ENCODE measurements at regions of chr11 and their contacts with region 1.

Region 1: GRCh38 chr11:66677599-66678375 is at the start of gene RBM4B:
- DNase-seq: peak; percentile 98
- ATAC-seq: peak; percentile 95
- H3K4me3 Mint-ChIP-seq: peak within 1 kb of the TSS; percentile 89
- H3K27ac Mint-ChIP-seq: peak within 1 kb of the TSS; percentile 100
- H3K4me1 Mint-ChIP-seq: peaks cover 29% of the 10 kb centered on the region
- H3K27me3 Mint-ChIP-seq: no peaks in the 10 kb centered on the region
- CTCF ChIP-seq: no peak
- total RNA-seq, gene RBM4B: 14.1 to 21.3 TPM (median 20.3 TPM) in 3 replicates

Region 2: GRCh38 chr11:66414120-66414934 is 263.5 kb before region 1 on chr11:
- CTCF ChIA-PET with region 1: interaction called, 42 read pairs
- POLR2A ChIA-PET with region 1: interaction called, 5 read pairs
- DNase-seq: peak; percentile 33
- ATAC-seq: peak; percentile 82
- H3K4me3 Mint-ChIP-seq: peak overlapping the region; percentile 39
- H3K27ac Mint-ChIP-seq: peak overlapping the region; percentile 78
- H3K4me1 Mint-ChIP-seq: peaks cover 46% of the 10 kb centered on the region
- H3K27me3 Mint-ChIP-seq: peaks cover 33% of the 10 kb centered on the region
- CTCF ChIP-seq: no peak

Region 3: DNA sequence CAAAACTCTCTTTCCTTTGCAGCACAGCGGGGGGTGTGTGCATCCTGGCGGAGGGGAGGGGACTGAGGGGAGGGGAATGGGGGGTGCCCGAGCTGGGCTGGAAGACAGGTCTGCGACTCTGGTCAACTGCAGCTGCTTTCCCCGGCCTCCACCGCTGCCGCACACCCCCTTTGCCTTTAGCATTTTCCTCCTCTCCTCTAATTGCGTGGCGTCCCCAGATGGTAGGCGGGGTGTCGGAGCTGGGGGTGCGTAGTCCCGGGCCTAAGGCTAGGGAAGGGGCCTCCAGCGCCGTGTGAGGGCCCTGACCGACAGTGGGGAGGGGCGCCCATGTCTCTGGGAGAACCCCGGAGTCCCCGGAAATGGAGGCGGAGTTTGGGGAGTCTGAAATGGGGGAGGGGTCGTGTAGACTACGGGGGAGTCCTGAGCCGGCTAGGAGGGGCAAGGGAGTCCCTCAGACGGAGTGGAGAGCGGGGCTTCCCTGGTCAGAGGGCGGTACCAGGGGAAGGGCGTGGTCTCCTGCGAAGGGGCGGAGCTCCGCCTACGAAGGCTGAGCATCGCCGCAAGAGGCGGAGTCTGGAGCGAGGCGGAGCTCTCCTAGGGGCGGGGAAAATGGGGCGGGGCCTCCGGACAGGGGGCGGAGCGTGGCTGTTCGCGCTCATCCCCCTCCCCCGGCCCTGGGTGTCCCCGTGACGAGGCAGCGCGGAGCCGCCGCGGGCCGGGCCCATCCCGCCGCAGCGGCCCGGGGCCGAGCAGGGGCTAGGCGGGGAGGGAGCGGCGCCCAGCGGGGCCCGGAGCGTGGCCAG is 211.4 kb before region 1 on chr11 and contains the start of gene PELI3:
- CTCF ChIA-PET with region 1: interaction called, 20 read pairs
- POLR2A ChIA-PET with region 1: interaction called, 8 read pairs
- DNase-seq: peak; percentile 98
- ATAC-seq: peak; percentile 94
- H3K4me3 Mint-ChIP-seq: peak within 1 kb of the TSS; percentile 88
- H3K27ac Mint-ChIP-seq: peak within 1 kb of the TSS; percentile 90
- H3K4me1 Mint-ChIP-seq: peaks cover 43% of the 10 kb centered on the region
- H3K27me3 Mint-ChIP-seq: no peaks in the 10 kb centered on the region; the same call in 1 of the 2 replicates
- CTCF ChIP-seq: no peak
- total RNA-seq, gene PELI3: 6.7 to 7.8 TPM (median 6.8 TPM) in 3 replicates

Region 4: DNA sequence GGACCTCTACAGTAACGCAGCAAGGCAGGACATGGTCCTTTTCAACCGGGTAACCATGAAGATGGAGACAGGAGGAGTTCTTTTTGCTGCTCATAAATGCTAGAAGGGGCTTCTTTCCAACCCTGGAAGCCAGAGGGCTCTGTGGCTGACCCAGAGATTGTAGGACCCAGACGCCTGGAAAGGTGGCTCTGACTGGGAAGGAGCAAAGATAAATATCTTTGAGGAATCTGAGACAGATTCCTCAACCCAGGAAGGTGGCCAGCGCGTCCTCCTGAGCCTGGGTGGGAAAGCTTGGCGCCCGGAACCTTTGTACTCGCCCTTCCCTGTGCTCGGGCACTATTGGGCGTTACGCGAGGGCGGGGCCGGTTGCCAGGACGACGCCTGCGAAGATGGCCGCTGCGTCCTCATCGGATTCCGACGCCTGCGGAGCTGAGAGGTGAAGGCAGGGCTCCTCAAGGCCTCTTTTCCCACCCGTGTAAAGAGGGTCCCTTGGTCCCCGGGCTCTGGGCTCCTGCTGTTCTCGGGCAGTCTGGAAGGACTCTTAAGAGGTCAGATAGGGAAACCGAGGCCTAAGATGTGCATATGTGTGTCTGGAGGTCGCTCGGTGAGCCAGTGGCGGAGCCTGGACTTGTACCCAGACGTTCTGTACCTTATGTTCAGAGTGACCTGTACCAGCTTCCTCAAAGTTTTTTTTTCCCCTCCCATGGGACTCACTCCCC is 167.4 kb before region 1 on chr11 and contains the start of gene BBS1:
- CTCF ChIA-PET with region 1: interaction called, 12 read pairs
- POLR2A ChIA-PET with region 1: interaction called, 3 read pairs
- DNase-seq: peak; percentile 89
- ATAC-seq: peak; percentile 97
- H3K4me3 Mint-ChIP-seq: peak within 1 kb of the TSS; percentile 99
- H3K27ac Mint-ChIP-seq: peak within 1 kb of the TSS; percentile 80
- H3K4me1 Mint-ChIP-seq: peaks cover 7% of the 10 kb centered on the region
- H3K27me3 Mint-ChIP-seq: no peaks in the 10 kb centered on the region
- CTCF ChIP-seq: no peak
- total RNA-seq, gene BBS1: 22.9 to 26.8 TPM (median 24.1 TPM) in 3 replicates

Region 5: GRCh38 chr11:66568124-66568916 is 109.5 kb before region 1 on chr11 and contains the start of gene CTSF:
- CTCF ChIA-PET with region 1: interaction called, 23 read pairs
- POLR2A ChIA-PET with region 1: no interaction called
- DNase-seq: peak; percentile 53
- ATAC-seq: no peak
- H3K4me3 Mint-ChIP-seq: peak within 1 kb of the TSS; percentile 16; the same call in 1 of the 2 replicates
- H3K27ac Mint-ChIP-seq: peak within 1 kb of the TSS; percentile 48; the same call in 1 of the 2 replicates
- H3K4me1 Mint-ChIP-seq: peaks cover 21% of the 10 kb centered on the region
- H3K27me3 Mint-ChIP-seq: peaks cover 15% of the 10 kb centered on the region
- CTCF ChIP-seq: no peak
- total RNA-seq, gene CTSF: 4.4 to 4.9 TPM (median 4.7 TPM) in 3 replicates

Region 6: DNA sequence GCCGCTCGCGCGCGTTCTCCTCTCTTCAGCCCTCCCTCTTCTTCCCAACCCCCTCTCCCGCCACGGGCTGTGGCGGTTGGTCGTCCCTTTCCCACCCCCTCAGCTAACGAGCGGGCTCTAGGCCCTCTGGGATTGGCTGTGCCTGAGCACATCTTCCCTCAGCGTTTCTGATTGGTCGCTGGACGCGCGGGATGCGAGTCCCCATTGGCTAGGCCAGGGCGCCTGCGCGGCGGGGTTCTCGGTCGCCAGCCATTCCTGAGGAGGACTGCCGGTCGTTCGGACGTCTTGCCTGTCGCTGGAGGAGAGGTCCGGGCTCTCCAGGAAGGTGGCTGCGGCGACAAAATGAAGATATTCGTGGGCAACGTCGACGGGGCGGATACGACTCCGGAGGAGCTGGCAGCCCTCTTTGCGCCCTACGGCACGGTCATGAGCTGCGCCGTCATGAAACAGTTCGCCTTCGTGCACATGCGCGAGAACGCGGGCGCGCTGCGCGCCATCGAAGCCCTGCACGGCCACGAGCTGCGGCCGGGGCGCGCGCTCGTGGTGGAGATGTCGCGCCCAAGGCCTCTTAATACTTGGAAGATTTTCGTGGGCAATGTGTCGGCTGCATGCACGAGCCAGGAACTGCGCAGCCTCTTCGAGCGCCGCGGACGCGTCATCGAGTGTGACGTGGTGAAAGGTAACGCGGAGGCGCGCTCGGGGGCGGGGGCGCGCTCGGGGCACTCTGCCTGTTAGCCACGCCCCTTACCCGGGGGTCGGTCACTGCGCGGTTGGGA is 61.2 kb before region 1 on chr11 and contains the start of gene RBM14:
- CTCF ChIA-PET with region 1: interaction called, 9 read pairs
- POLR2A ChIA-PET with region 1: interaction called, 18 read pairs
- DNase-seq: peak; percentile 99
- ATAC-seq: peak; percentile 96
- H3K4me3 Mint-ChIP-seq: peak within 1 kb of the TSS; percentile 98
- H3K27ac Mint-ChIP-seq: peak within 1 kb of the TSS; percentile 99
- H3K4me1 Mint-ChIP-seq: peaks cover 33% of the 10 kb centered on the region
- H3K27me3 Mint-ChIP-seq: no peaks in the 10 kb centered on the region
- CTCF ChIP-seq: no peak
- total RNA-seq, gene RBM14: 92.0 to 146 TPM (median 137 TPM) in 3 replicates

Region 7: GRCh38 chr11:66842896-66843775 is 165.3 kb after region 1 on chr11 and contains the start of gene RCE1:
- CTCF ChIA-PET with region 1: interaction called, 10 read pairs
- POLR2A ChIA-PET with region 1: interaction called, 3 read pairs
- DNase-seq: peak; percentile 86
- ATAC-seq: peak; percentile 78
- H3K4me3 Mint-ChIP-seq: peak within 1 kb of the TSS; percentile 82
- H3K27ac Mint-ChIP-seq: peak within 1 kb of the TSS; percentile 87
- H3K4me1 Mint-ChIP-seq: peaks cover 20% of the 10 kb centered on the region
- H3K27me3 Mint-ChIP-seq: no peaks in the 10 kb centered on the region
- CTCF ChIP-seq: no peak
- total RNA-seq, gene RCE1: 34.5 to 36.9 TPM (median 34.6 TPM) in 3 replicates

Measured in WTC11 (cell line).